Spleen (tissue), 13 donors: ENCODE measurements at regions of chr6 and their contacts with region 1.

Region 1: GRCh38 chr6:36759148-36759759 is 61.6 kb downstream of the RAB44 start:
- DNase-seq: peak; percentile 96
- H3K4me3 ChIP-seq: no peak overlapping the region
- H3K27ac ChIP-seq: peak overlapping the region in 3 of 8 donors; percentile 6 to 82 (median 10)
- H3K4me1 ChIP-seq: peaks cover 33 to 55% (median 51%) of the 10 kb centered on the region in 6 donors
- H3K27me3 ChIP-seq: no peaks in the 10 kb centered on the region
- CTCF ChIP-seq: peak; percentile 89 to 99 (median 94)
- POLR2A ChIP-seq: no peak

Region 2: DNA sequence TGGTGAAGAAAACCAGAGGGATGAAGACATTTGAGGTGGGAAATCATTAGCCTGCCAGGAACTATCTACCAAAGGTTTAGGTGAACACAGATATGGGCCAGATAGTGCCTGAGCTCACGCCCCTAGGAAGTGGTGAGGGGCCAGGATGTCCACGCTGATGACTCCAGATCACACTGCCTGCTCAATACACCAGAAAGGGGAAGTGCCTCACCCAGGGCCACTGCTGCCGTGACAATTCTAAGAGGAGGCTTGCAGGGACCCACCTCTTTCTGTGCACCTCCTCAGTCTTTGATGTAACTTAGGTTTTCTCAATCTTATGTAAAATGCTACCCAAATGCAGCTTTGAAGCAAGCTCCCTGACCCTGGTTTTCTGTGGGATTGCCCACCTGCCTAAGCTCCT is 67.0 kb before region 1 on chr6:
- intact Hi-C with region 1: loop called (anchors 5 kb)
- DNase-seq: peak; percentile 92
- H3K4me3 ChIP-seq: peak overlapping the region in 1 of 8 donors; percentile 11
- H3K27ac ChIP-seq: peak overlapping the region; percentile 40 to 89 (median 72)
- H3K4me1 ChIP-seq: peaks cover 12 to 36% (median 21%) of the 10 kb centered on the region in 6 donors
- H3K27me3 ChIP-seq: no peaks in the 10 kb centered on the region
- CTCF ChIP-seq: no peak
- POLR2A ChIP-seq: no peak